ENCODE measurements at regions of chr2 and their contacts with region 1.

Region 1: DNA sequence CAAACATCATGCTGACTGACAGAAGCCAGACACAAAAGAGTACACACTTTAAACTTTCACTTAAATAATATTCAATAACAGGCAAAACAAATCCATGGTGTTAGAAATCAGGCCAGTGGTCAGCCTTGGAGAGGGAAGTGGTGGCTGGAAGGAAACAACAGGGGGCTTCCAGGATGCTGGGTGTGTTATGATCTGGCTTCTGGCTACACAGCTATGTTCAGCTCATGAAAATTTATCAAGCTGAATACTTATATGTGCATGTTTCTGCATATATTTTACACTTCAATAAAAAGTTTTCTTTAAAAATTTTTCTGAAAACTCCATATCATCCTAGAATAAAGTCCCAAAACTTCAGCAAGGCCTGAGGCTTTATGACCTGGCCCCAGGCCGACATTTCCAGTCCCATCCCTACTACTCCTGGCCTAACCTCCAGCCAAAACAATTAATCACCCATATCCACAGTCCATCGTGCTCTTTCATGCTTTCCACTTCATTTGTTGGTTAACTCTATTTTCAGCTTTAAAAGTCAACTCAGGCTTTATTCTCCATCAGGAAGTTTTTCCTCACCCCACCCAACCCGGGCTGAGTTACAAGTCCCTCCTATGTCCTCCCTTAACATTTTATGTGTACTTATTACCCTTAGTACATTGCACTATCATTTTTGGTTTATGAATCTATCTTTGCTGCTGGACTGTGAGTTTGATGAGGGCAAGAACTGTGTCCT is 27.9 kb upstream of the SPTBN1 start:
- DNase-seq: no peak
- ATAC-seq: peak; percentile 42

Region 2: GRCh38 chr2:54360055-54360792 is 68.0 kb before region 1 on chr2:
- intact Hi-C with region 1: loop called (anchors 10 kb)
- DNase-seq: peak; percentile 69
- ATAC-seq: peak; percentile 94

Measured in Right ventricle myocardium superior (tissue), 1 donor.